HEK293 (cell line): ENCODE measurements at regions of chr10 and their contacts with region 1.

Region 1: DNA sequence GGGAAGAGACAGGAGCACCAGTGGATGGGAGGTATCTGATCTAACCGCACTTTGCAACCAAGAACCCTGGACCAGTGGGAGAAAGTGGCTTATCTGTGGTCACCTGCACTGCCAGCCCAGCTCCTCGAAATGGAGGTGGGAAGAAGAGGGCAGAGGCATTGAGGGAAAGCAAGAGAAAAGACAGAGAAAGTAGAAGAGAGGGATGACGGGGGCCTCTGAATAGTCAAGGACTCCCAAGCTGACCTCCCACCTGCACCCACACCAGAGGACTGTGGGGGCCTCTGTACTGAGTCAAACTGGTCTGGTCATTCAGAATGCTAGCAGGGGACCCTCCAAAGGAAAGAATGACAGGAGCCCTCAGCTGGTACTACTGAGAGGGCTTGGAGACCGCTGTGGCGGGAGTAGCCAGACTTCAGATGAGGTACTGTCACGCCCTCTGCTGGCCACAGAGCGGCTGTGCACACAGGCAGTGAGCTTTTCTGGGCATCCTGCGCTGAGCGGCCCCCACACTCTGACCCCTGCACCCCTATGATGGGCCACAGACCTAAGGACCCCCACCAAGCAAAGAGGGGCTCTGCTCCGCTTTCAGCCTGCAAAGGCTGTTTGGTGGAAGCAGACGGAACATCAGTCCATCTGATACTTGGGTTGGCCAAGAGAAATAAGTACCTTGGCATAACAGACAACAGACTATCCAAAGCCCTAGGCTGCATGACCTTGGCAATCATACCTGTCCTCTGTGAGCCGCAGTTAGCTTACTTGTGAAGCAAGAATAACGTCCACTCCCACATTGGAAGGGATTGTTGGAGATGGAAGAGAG is 112.9 kb downstream of the COL13A1 start:
- H3K4me3 ChIP-seq: no peak overlapping the region
- H3K27ac ChIP-seq: no peak overlapping the region
- H3K4me1 ChIP-seq: peaks cover 2% of the 10 kb centered on the region; the same call in 1 of the 2 replicates
- CTCF ChIP-seq: peak; percentile 73

Region 2: GRCh38 chr10:69716711-69717560 is 197.7 kb before region 1 on chr10:
- CTCF ChIA-PET with region 1: interaction called, 10 read pairs
- POLR2A ChIA-PET with region 1: no interaction called
- H3K4me3 ChIP-seq: no peak overlapping the region
- H3K27ac ChIP-seq: no peak overlapping the region
- H3K4me1 ChIP-seq: no peaks in the 10 kb centered on the region
- CTCF ChIP-seq: peak; percentile 70

Region 3: GRCh38 chr10:69742928-69743602 is 171.5 kb before region 1 on chr10:
- CTCF ChIA-PET with region 1: interaction called, 28 read pairs
- POLR2A ChIA-PET with region 1: no interaction called
- H3K4me3 ChIP-seq: no peak overlapping the region
- H3K27ac ChIP-seq: no peak overlapping the region
- H3K4me1 ChIP-seq: no peaks in the 10 kb centered on the region
- CTCF ChIP-seq: peak; percentile 48

Region 4: GRCh38 chr10:69800109-69800508 is 114.5 kb before region 1 on chr10:
- CTCF ChIA-PET with region 1: interaction called, 15 read pairs
- POLR2A ChIA-PET with region 1: no interaction called
- H3K4me3 ChIP-seq: no peak overlapping the region
- H3K27ac ChIP-seq: no peak overlapping the region
- H3K4me1 ChIP-seq: peaks cover 2% of the 10 kb centered on the region; the same call in 1 of the 2 replicates
- CTCF ChIP-seq: no peak

Region 5: GRCh38 chr10:69883310-69884023 is 31.1 kb before region 1 on chr10:
- CTCF ChIA-PET with region 1: interaction called, 21 read pairs
- POLR2A ChIA-PET with region 1: no interaction called
- H3K4me3 ChIP-seq: no peak overlapping the region
- H3K27ac ChIP-seq: no peak overlapping the region
- H3K4me1 ChIP-seq: no peaks in the 10 kb centered on the region
- CTCF ChIP-seq: no peak

Region 6: DNA sequence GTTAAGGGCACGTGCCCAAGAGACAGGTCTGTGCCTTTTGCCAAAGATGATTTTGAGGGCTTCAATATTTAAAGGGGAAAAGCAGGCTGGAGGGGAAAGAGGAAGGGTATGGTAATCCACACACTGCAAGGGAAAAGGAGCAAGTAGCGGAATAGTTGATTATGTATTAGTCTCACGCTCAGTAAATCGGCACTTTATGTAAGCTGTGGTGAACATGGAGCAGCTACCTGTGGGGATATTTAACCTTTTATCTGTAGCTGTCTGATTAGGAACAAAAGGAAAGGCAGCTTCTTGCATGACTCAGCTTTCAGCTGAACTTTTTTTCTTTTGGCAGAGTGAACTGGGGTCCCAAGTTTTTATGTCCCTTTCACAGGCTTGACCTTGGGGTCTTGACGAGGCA is 10.5 kb after region 1 on chr10:
- CTCF ChIA-PET with region 1: interaction called, 24 read pairs
- POLR2A ChIA-PET with region 1: no interaction called
- H3K4me3 ChIP-seq: no peak overlapping the region
- H3K27ac ChIP-seq: no peak overlapping the region
- H3K4me1 ChIP-seq: no peaks in the 10 kb centered on the region
- CTCF ChIP-seq: no peak

Region 7: DNA sequence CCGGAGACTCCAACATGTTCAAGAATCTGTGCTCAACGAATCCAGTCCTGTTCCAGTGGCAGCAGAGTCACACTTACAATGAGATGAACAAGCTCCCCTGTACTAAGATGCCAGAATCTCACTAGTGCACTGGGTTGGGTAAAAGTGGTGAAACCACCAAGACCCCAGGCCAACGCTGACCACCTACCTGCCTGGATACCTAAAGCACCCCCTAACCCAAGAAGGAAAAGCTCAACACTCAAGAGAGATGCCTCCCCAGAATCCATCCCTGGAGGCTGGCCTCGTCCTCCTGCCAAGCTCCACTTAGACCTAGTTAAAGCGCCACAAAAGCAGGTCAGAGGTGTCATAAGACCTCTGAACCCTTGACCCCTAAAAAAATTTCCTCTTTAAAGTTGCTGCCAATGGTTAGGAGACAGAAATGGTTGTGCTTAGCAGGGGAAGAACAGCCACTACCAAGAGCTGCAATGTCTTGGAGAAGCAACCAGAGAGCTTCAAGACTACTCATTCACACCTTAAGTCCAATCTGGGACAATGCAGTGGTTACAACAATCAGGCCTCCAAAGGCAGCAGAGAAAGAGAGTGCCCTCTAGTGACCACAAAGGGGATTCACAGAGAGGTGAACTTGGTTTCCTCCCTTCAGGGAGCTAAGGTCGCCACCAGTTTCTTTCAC is 43.4 kb after region 1 on chr10:
- CTCF ChIA-PET with region 1: interaction called, 16 read pairs
- POLR2A ChIA-PET with region 1: no interaction called
- H3K4me3 ChIP-seq: no peak overlapping the region
- H3K27ac ChIP-seq: no peak overlapping the region
- H3K4me1 ChIP-seq: no peaks in the 10 kb centered on the region
- CTCF ChIP-seq: peak; percentile 53

Region 8: GRCh38 chr10:70032667-70033289 is 118.2 kb after region 1 on chr10:
- CTCF ChIA-PET with region 1: no interaction called
- POLR2A ChIA-PET with region 1: no interaction called
- H3K4me3 ChIP-seq: no peak overlapping the region
- H3K27ac ChIP-seq: no peak overlapping the region
- H3K4me1 ChIP-seq: no peaks in the 10 kb centered on the region
- CTCF ChIP-seq: no peak